CD4-positive, alpha-beta memory T cell (primary cell): ENCODE measurements at regions of chr19 and their contacts with region 1.

Region 1: DNA sequence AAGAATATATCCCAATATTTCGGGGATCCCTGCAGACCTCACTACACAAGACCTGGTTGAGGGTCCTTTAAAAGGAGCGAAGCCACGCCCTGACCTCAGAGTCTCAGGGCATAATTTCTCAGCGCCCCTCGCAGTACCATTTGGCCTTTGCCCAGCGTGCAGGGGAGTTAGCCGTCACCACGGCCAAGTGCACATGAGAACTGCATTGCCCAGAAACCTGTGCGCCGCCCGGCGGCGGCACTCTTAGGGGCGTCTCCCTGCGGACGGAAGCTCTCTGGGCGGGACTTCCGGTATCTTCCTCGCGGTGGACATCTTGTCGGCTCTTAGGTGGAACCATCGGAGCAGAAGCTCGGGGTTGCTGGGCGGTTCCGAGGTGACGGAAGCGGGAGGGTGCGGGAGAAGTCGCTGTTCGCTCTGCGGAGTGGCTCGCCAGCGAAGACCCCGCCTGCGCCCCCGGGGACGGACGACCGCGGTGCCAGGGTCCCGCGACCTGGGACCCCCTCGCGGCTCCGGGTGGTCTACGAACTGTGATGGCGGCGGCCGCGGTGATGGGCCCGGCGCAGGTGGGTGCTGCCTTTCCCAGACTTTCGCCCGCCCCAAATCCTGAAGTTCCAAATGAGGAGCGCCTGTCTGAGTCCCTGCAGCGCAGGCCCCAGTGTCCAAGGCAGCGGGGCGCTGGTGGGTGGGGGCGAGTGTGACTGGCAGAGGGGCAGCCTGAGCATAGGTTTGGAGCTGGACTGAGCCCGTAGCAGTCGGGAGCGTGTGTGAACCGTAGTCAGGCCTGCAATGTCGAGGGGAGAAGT is at the start of gene ZNF134:
- DNase-seq: peak; percentile 86 to 88 (median 87)
- H3K4me3 ChIP-seq: peak within 1 kb of the TSS; percentile 78 to 92
- H3K4me3 Mint-ChIP-seq: peak within 1 kb of the TSS; percentile 89 to 94 (median 92)
- H3K27ac ChIP-seq: peak within 1 kb of the TSS; percentile 58
- H3K27ac Mint-ChIP-seq: peak within 1 kb of the TSS; percentile 57 to 90 (median 88)
- H3K4me1 ChIP-seq: peaks cover 18% of the 10 kb centered on the region
- H3K4me1 Mint-ChIP-seq: peaks cover 17 to 42% (median 32%) of the 10 kb centered on the region in 4 donors
- H3K27me3 ChIP-seq: no peaks in the 10 kb centered on the region
- H3K27me3 Mint-ChIP-seq: no peaks in the 10 kb centered on the region
- total RNA-seq, gene ZNF134: 32.1 to 32.3 TPM

Region 2: DNA sequence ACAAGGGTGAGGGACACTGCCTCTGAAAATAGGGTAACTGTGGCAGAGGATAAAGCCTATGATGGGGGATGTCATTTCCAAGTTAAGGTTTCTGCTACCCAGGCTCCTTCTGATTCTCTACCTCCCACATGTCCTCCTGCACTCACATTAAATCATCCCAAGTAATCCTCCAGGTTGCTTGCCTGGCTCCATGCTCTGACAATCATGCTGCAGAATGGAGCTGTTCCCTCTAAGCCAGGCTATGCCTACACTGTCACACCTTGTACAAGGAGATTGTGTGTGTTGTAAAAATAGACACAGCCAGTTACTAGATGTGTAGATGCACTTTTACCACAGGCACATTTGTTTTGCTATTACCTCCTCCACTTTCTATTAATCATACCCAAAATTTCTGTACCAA is 43.4 kb before region 1 on chr19:
- CTCF ChIA-PET with region 1: no interaction called
- POLR2A ChIA-PET with region 1: no interaction called
- intact Hi-C with region 1: no loop called
- DNase-seq: no peak
- H3K4me3 ChIP-seq: no peak overlapping the region
- H3K4me3 Mint-ChIP-seq: no peak overlapping the region
- H3K27ac ChIP-seq: no peak overlapping the region
- H3K27ac Mint-ChIP-seq: no peak overlapping the region
- H3K4me1 ChIP-seq: no peaks in the 10 kb centered on the region
- H3K4me1 Mint-ChIP-seq: no peaks in the 10 kb centered on the region
- H3K27me3 ChIP-seq: no peaks in the 10 kb centered on the region
- H3K27me3 Mint-ChIP-seq: no peaks in the 10 kb centered on the region

Region 3: GRCh38 chr19:57599761-57600383 is 14.3 kb before region 1 on chr19 and contains the start of gene ZNF530:
- CTCF ChIA-PET with region 1: no interaction called
- POLR2A ChIA-PET with region 1: interaction called, 5 read pairs
- intact Hi-C with region 1: loop called (anchors 1 kb)
- DNase-seq: peak; percentile 74 to 80 (median 76)
- H3K4me3 ChIP-seq: peak within 1 kb of the TSS; percentile 38 to 76
- H3K4me3 Mint-ChIP-seq: peak within 1 kb of the TSS; percentile 86 to 93 (median 90)
- H3K27ac ChIP-seq: peak within 1 kb of the TSS; percentile 40
- H3K27ac Mint-ChIP-seq: peak within 1 kb of the TSS; percentile 28 to 93 (median 81)
- H3K4me1 ChIP-seq: peaks cover 16% of the 10 kb centered on the region
- H3K4me1 Mint-ChIP-seq: peaks cover 5 to 24% (median 19%) of the 10 kb centered on the region in 4 donors
- H3K27me3 ChIP-seq: no peaks in the 10 kb centered on the region
- H3K27me3 Mint-ChIP-seq: peaks cover 0 to 3% of the 10 kb centered on the region in 2 donors
- total RNA-seq, gene ZNF530: 9.9 to 10.9 TPM

Region 4: DNA sequence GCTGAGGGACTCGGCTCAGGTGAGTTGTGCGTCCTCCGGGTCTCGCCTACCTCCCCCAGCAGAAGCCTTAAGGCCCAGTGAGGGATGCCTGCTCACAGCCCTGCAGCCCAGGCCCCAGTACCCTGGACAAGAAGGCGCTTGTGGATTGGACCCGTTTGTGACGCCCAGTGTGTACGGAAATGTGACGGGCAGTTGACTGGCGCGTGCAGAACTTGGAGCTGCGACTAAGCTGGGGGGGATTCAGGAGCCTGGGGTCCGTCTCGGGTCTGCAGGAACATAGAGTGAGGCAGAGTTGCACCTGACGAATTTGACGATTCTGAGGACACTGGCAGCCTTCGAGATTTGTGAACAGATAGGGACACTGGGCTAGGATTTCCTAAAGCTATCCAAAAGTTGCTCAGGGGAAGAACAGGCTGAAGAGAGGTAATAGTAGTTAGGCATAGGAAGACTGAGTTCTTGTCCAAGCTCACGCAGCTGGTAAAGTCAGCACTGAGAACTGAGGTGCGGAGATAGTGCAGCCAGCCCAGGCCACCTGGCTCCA is 68.2 kb after region 1 on chr19:
- CTCF ChIA-PET with region 1: no interaction called
- POLR2A ChIA-PET with region 1: interaction called, 7 read pairs
- intact Hi-C with region 1: loop called (anchors 1 kb)
- DNase-seq: no peak
- H3K4me3 ChIP-seq: peak overlapping the region; percentile 87 to 92
- H3K4me3 Mint-ChIP-seq: peak overlapping the region; percentile 96 to 99 (median 97)
- H3K27ac ChIP-seq: peak overlapping the region; percentile 54
- H3K27ac Mint-ChIP-seq: peak overlapping the region; percentile 91 to 99 (median 97)
- H3K4me1 ChIP-seq: peaks cover 18% of the 10 kb centered on the region
- H3K4me1 Mint-ChIP-seq: peaks cover 21 to 45% (median 38%) of the 10 kb centered on the region in 4 donors
- H3K27me3 ChIP-seq: no peaks in the 10 kb centered on the region
- H3K27me3 Mint-ChIP-seq: no peaks in the 10 kb centered on the region